Prostate gland (tissue), 2 donors: ENCODE measurements at regions of chr10 and their contacts with region 1.

Region 1: GRCh38 chr10:88835096-88835909 is 16.3 kb downstream of the ANKRD22 start:
- DNase-seq: peak; percentile 82
- H3K4me3 ChIP-seq: no peak overlapping the region
- H3K27ac ChIP-seq: no peak overlapping the region
- H3K4me1 ChIP-seq: no peaks in the 10 kb centered on the region
- H3K27me3 ChIP-seq: no peaks in the 10 kb centered on the region
- CTCF ChIP-seq: peak; percentile 65 to 93 (median 89)
- POLR2A ChIP-seq: no peak

Region 2: DNA sequence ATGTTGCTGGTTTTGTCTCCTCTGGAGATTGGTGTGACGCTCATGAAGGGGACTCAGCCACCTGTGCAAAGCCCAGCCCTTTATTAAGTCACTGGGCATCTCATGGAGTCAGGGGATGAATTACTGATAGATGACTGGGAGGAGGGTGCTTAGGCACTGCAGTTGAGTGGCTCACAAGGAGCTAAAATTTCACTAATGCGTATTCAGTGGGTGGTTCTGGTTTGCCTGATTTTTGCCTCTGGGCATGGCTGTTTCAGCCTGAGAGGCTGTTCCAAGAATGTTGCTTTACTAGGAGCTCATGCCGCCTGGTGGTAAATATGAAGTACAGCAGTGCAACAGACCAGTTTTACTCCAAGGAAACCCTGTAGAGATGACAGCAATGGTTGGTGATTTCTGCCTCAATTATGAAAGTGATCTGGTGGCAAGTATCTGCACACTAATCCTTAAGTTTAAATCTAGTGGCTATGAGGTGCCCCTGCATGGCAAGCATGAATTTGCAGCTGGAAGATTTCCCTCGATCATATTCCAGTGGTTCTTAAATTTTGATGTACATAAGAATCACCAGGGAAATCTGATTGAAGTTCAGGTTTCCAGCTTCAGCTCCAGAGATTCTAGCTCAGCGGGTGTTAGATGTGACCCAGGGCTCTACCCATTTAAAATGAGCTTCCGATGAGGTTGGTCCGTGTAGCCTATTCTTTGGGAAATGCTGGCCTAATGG is 97.4 kb after region 1 on chr10:
- intact Hi-C with region 1: loop called (anchors 1 kb)
- DNase-seq: peak; percentile 72
- H3K4me3 ChIP-seq: no peak overlapping the region
- H3K27ac ChIP-seq: peak overlapping the region in 1 of 2 donors; percentile 25
- H3K4me1 ChIP-seq: no peaks in the 10 kb centered on the region
- H3K27me3 ChIP-seq: no peaks in the 10 kb centered on the region
- CTCF ChIP-seq: peak; percentile 77 to 95 (median 88)
- POLR2A ChIP-seq: no peak

Region 3: DNA sequence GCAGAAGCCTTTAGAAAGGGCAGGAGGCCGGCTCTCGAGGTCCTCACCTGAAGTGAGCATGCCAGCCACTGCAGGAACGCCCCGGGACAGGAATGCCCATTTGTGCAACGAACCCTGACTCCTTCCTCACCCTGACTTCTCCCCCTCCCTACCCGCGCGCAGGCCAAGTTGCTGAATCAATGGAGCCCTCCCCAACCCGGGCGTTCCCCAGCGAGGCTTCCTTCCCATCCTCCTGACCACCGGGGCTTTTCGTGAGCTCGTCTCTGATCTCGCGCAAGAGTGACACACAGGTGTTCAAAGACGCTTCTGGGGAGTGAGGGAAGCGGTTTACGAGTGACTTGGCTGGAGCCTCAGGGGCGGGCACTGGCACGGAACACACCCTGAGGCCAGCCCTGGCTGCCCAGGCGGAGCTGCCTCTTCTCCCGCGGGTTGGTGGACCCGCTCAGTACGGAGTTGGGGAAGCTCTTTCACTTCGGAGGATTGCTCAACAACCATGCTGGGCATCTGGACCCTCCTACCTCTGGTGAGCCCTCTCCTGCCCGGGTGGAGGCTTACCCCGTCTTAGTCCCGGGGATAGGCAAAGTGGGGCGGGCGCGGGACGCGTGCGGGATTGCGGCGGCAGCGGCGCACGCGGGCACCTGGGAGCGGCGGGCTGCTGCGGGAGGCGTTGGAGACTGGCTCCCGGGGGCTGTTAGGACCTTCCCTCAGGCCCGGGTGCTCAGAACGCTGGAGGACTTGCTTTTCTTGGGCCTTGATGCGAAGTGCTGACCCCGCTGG is 155.3 kb after region 1 on chr10 and contains the start of gene FAS:
- intact Hi-C with region 1: loop called (anchors 2 kb)
- DNase-seq: peak; percentile 67
- H3K4me3 ChIP-seq: peak within 1 kb of the TSS; percentile 69 to 84
- H3K27ac ChIP-seq: peak within 1 kb of the TSS; percentile 87 to 95
- H3K4me1 ChIP-seq: no peaks in the 10 kb centered on the region
- H3K27me3 ChIP-seq: no peaks in the 10 kb centered on the region
- CTCF ChIP-seq: no peak
- POLR2A ChIP-seq: peak; percentile 58
- total RNA-seq, gene FAS: 13.7 to 17.7 TPM

Region 4: DNA sequence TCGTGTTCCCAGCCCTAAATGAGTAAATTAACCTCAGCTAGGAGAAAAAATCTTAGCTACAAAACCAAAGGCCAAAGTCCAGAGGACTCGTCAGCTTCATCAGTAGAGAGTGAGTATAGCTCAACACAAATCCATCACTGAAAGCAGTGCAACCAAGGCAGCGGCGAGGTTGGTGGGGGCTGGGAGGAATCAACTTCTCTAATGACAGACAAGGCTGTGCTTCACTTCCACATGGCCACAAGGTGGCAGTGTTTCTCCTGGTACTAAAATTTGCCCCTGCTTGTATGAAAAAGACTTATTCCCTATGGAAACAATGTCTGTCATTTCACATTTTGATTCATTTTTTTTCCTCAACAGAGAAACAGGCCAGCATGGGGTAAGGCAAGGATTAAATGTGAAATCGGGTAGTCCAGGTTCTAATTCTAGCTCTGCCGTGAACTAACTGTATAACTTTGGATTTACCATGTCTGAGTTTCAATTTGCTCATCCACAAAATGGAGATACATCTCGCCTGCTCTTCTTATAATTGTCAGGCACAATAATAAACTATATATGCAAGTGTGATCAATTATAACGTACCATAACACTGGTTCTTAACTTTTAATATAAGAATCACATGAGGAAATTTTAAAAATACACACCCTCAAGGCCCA is 194.6 kb after region 1 on chr10:
- intact Hi-C with region 1: loop called (anchors 10 kb)
- DNase-seq: peak; percentile 74
- H3K4me3 ChIP-seq: no peak overlapping the region
- H3K27ac ChIP-seq: no peak overlapping the region
- H3K4me1 ChIP-seq: peaks cover 3% of the 10 kb centered on the region
- H3K27me3 ChIP-seq: no peaks in the 10 kb centered on the region
- CTCF ChIP-seq: peak; percentile 84 to 95 (median 88)
- POLR2A ChIP-seq: no peak

Region 5: GRCh38 chr10:89217057-89217990 is 382.0 kb after region 1 on chr10:
- intact Hi-C with region 1: loop called (anchors 5 kb)
- DNase-seq: peak; percentile 54
- H3K4me3 ChIP-seq: no peak overlapping the region
- H3K27ac ChIP-seq: peak overlapping the region in 1 of 2 donors; percentile 32
- H3K4me1 ChIP-seq: no peaks in the 10 kb centered on the region
- H3K27me3 ChIP-seq: no peaks in the 10 kb centered on the region
- CTCF ChIP-seq: peak; percentile 79 to 91 (median 86)
- POLR2A ChIP-seq: no peak